Activated CD4-positive, alpha-beta T cell treated with anti-CD3 and anti-CD28 coated beads, Interleukin-2, amount 10 ng/mL, durations not matched to agents 7 days and 5 days (primary cell): ENCODE measurements at regions of chr2 and their contacts with region 1.

Region 1: GRCh38 chr2:231674587-231675338 is 33.6 kb upstream of the PTMA start:
- DNase-seq: peak; percentile 60
- H3K4me3 Mint-ChIP-seq: no peak overlapping the region
- H3K27ac Mint-ChIP-seq: peak overlapping the region; percentile 22
- H3K4me1 Mint-ChIP-seq: peaks cover 32% of the 10 kb centered on the region
- H3K27me3 Mint-ChIP-seq: no peaks in the 10 kb centered on the region

Region 2: GRCh38 chr2:231364961-231365810 is 309.6 kb before region 1 on chr2:
- CTCF ChIA-PET with region 1: no interaction called
- POLR2A ChIA-PET with region 1: no interaction called
- DNase-seq: no peak
- H3K4me3 Mint-ChIP-seq: no peak overlapping the region
- H3K27ac Mint-ChIP-seq: peak overlapping the region; percentile 50
- H3K4me1 Mint-ChIP-seq: peaks cover 15% of the 10 kb centered on the region
- H3K27me3 Mint-ChIP-seq: no peaks in the 10 kb centered on the region

Region 3: DNA sequence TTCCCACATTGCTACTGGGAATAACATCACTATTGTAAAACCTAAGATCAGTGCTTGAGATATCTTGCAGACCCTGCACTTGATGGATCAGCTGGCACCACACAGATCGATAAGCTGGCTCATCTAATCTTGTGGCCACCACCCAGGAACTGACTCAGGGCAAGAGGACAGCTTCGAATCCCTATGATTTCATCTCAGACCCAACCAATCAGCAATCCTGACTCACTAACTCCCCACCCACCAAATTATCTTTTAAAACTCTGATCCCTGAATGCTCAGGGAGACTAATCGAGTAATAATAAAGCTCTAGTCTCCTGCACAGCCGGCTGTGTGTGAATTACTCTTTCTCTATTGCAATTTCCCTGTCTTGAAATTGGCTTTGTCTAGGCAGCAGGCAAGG is 93.4 kb before region 1 on chr2:
- CTCF ChIA-PET with region 1: no interaction called
- POLR2A ChIA-PET with region 1: no interaction called
- DNase-seq: no peak
- H3K4me3 Mint-ChIP-seq: no peak overlapping the region
- H3K27ac Mint-ChIP-seq: no peak overlapping the region
- H3K4me1 Mint-ChIP-seq: no peaks in the 10 kb centered on the region
- H3K27me3 Mint-ChIP-seq: peaks cover 11% of the 10 kb centered on the region

Region 4: GRCh38 chr2:231612179-231613053 is 62.3 kb before region 1 on chr2:
- CTCF ChIA-PET with region 1: interaction called, 121 read pairs
- POLR2A ChIA-PET with region 1: interaction called, 4 read pairs
- DNase-seq: peak; percentile 90
- H3K4me3 Mint-ChIP-seq: peak overlapping the region; percentile 72
- H3K27ac Mint-ChIP-seq: peak overlapping the region; percentile 97
- H3K4me1 Mint-ChIP-seq: peaks cover 56% of the 10 kb centered on the region
- H3K27me3 Mint-ChIP-seq: no peaks in the 10 kb centered on the region

Region 5: DNA sequence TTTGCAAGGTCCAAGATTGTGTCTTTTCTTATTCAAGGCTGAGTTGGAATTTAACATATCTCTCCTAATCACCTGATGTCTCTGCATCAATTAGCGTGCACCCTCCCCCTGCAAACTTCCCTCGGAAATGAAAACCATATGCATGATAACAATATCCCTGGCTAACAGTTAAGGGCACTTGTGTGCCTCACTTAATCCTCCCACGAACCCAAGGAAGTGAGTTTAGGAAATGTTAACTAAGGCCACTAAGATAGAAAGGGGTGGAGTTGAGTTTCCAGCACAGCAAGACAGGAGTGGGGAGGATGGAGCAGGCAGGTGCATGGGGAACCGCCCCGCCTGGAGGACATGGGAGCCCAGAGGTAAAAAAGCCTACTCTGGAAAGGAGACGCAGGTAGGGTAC is 18.9 kb before region 1 on chr2:
- CTCF ChIA-PET with region 1: interaction called, 15 read pairs
- POLR2A ChIA-PET with region 1: no interaction called
- DNase-seq: no peak
- H3K4me3 Mint-ChIP-seq: no peak overlapping the region
- H3K27ac Mint-ChIP-seq: no peak overlapping the region
- H3K4me1 Mint-ChIP-seq: peaks cover 3% of the 10 kb centered on the region
- H3K27me3 Mint-ChIP-seq: no peaks in the 10 kb centered on the region

Region 6: GRCh38 chr2:231687133-231687852 is 12.5 kb after region 1 on chr2:
- CTCF ChIA-PET with region 1: interaction called, 15 read pairs
- POLR2A ChIA-PET with region 1: no interaction called
- DNase-seq: peak; percentile 54
- H3K4me3 Mint-ChIP-seq: no peak overlapping the region
- H3K27ac Mint-ChIP-seq: no peak overlapping the region
- H3K4me1 Mint-ChIP-seq: peaks cover 10% of the 10 kb centered on the region
- H3K27me3 Mint-ChIP-seq: peaks cover 5% of the 10 kb centered on the region

Region 7: DNA sequence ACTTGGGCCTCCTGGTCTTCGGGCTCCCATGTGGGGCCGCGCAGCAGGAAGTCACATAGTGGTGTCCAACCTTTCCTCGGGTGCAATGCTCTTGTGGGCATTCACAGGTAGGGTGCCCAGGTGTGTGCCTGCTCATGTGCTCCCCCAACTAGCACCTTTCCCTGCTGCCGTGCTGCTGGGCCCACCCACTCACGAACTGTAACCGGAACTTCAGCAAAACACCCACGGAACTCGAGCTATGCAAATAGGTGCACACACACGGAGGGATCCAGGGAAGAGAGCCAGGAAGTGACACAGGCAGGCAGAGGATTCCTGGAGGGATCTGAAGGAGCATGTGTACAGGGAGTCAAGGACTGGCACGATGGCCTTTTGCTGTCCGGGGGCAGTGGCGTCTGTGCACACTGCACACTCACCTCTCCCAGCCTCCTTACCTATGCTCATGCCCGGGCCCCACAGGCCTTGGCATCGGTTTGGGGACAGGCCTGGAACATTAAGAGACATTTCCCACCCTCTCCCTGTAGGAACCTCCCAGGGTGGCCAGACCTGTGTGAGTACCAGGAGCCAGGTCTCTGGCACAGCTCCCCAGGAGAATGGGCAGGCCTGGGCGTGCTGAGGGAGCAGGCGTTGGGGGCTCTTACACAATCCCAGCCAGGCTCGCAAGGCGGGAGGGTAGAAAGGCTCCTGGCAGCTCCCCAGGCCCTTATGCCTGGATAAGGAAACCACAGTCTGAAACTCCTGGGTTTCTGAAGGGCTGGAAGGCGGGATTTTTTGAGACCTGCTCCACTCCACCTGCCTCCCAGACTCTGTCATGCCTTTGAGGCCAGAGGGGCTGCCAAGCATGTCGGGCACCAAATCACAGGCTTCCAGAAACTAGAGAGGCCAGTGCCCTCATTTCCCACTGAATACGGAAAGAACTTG is 27.0 kb after region 1 on chr2:
- CTCF ChIA-PET with region 1: interaction called, 131 read pairs
- POLR2A ChIA-PET with region 1: no interaction called
- DNase-seq: no peak
- H3K4me3 Mint-ChIP-seq: no peak overlapping the region
- H3K27ac Mint-ChIP-seq: no peak overlapping the region
- H3K4me1 Mint-ChIP-seq: peaks cover 17% of the 10 kb centered on the region
- H3K27me3 Mint-ChIP-seq: peaks cover 2% of the 10 kb centered on the region

Region 8: DNA sequence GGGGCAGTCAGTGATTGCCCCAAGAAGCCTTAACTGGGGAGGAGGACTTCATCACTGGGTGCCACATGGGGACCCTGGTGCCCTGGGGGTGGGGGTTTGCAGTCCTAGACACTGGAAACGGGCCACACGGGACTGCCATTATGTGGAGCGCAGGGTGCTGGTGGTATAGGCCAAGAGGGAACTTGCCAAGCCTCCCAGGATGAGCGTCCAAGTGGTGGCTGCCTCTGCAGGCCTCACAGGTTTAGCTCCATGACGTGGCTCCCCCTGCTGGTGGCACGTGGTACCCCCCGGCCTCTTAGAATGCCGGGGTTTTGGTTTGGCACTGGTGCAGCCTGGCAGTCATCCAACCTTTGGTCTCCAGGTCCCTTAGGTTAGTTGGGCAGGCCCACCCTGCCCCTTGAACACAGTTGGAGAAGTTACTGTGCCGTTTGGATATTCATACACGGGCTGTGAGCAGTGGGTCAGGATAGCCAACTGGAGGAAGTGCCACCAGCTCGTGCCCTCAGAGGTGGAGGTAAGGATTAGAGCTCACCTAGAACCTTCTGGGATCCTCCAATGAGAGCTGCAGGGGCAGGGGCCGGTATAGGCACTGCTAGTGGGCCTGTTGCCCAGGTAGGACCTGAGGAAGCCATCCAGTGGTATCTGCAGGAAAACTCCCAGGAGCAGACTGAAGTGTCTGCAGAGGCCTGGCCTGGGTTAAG is 39.1 kb after region 1 on chr2:
- CTCF ChIA-PET with region 1: interaction called, 167 read pairs
- POLR2A ChIA-PET with region 1: interaction called, 7 read pairs
- DNase-seq: peak; percentile 91
- H3K4me3 Mint-ChIP-seq: peak overlapping the region; percentile 56
- H3K27ac Mint-ChIP-seq: peak overlapping the region; percentile 91
- H3K4me1 Mint-ChIP-seq: peaks cover 32% of the 10 kb centered on the region
- H3K27me3 Mint-ChIP-seq: no peaks in the 10 kb centered on the region

Region 9: GRCh38 chr2:231769170-231770136 is 94.7 kb after region 1 on chr2:
- CTCF ChIA-PET with region 1: no interaction called
- POLR2A ChIA-PET with region 1: no interaction called
- DNase-seq: no peak
- H3K4me3 Mint-ChIP-seq: no peak overlapping the region
- H3K27ac Mint-ChIP-seq: no peak overlapping the region
- H3K4me1 Mint-ChIP-seq: peaks cover 30% of the 10 kb centered on the region
- H3K27me3 Mint-ChIP-seq: no peaks in the 10 kb centered on the region